Sigmoid colon (tissue), 7 donors: ENCODE measurements at regions of chr9 and their contacts with region 1.

Region 1: GRCh38 chr9:86354011-86354817 is at the start of gene TUT7:
- DNase-seq: peak; percentile 97
- H3K4me3 ChIP-seq: peak within 1 kb of the TSS; percentile 65 to 98 (median 77)
- H3K27ac ChIP-seq: peak within 1 kb of the TSS; percentile 93 to 99 (median 94)
- H3K4me1 ChIP-seq: peaks cover 0 to 48% (median 43%) of the 10 kb centered on the region in 4 donors
- H3K27me3 ChIP-seq: no peaks in the 10 kb centered on the region
- CTCF ChIP-seq: no peak
- EP300 ChIP-seq: peak in 1 of 4 donors; percentile 28
- POLR2A ChIP-seq: peak; percentile 41 to 57
- total RNA-seq, gene TUT7: 39.2 to 59.0 (median 48.2) TPM

Region 2: DNA sequence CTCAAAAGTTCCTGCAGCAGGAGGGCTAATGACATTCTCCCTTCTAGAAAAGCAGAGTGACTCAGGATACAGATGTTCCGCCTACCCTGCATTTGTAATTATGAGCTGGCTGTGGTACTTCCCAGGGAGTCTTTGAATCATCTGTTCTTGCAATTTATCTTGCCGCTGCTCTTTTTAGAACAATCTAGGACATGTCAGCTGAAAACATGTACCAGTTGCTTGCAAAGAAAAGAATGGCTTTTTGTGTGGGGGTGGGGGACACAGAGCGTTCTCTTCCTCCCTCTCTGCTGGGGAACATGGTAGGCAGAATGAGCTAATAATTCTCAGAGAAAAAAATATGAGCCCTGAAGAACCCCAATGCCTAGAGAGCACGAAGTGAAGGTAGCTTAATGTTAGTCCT is 51.7 kb after region 1 on chr9:
- intact Hi-C with region 1: loop called (anchors 5 kb)
- DNase-seq: no peak
- H3K4me3 ChIP-seq: no peak overlapping the region
- H3K27ac ChIP-seq: peak overlapping the region; percentile 62 to 81 (median 74)
- H3K4me1 ChIP-seq: peaks cover 0 to 43% (median 27%) of the 10 kb centered on the region in 4 donors
- H3K27me3 ChIP-seq: no peaks in the 10 kb centered on the region
- CTCF ChIP-seq: no peak
- EP300 ChIP-seq: no peak
- POLR2A ChIP-seq: no peak